HEK293T (cell line): ENCODE measurements at regions of chr16 and their contacts with region 1.

Region 1: DNA sequence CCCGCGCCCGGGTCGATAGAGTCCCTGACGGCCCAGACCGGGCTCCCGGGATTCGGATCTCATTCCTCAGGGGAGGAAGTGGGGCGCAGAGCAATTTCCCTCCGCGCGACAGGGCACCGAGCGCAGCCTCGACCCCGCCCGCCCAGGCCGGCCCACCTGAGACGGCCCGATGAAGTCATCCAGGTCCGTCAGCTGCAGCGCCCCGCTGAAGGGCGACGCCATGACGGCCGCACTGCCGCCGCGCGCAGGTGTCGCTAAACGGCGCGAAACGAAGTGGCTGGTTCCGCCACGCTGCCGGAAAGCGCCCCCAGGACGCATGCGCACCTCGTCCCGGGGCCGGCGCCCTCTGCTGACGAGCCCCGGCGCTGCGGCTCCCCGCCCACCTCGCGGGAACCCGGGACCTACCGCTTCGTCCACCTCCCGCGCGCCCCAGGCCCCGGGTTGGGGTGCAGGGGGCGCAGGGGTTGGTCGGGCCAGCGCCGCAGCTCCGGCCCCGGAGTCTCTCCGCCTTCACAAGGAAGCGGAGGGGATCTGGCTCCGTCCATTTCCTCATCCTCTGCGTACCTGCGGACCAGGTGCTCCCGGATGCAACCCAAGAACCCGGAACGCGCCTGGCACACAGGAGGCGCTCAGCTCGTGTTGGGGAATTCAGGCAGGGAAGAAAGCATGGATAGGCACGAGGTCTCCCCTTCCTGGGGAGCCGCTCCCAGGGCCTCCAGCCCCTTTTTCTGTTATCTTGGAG is at the start of gene CIAO3:
- DNase-seq: peak; percentile 94

Region 2: GRCh38 chr16:720990-721764 is 19.8 kb before region 1 on chr16 and contains the start of gene ANTKMT:
- CTCF ChIA-PET with region 1: interaction called, 4 read pairs
- POLR2A ChIA-PET with region 1: interaction called, 16 read pairs
- DNase-seq: peak; percentile 89

Region 3: DNA sequence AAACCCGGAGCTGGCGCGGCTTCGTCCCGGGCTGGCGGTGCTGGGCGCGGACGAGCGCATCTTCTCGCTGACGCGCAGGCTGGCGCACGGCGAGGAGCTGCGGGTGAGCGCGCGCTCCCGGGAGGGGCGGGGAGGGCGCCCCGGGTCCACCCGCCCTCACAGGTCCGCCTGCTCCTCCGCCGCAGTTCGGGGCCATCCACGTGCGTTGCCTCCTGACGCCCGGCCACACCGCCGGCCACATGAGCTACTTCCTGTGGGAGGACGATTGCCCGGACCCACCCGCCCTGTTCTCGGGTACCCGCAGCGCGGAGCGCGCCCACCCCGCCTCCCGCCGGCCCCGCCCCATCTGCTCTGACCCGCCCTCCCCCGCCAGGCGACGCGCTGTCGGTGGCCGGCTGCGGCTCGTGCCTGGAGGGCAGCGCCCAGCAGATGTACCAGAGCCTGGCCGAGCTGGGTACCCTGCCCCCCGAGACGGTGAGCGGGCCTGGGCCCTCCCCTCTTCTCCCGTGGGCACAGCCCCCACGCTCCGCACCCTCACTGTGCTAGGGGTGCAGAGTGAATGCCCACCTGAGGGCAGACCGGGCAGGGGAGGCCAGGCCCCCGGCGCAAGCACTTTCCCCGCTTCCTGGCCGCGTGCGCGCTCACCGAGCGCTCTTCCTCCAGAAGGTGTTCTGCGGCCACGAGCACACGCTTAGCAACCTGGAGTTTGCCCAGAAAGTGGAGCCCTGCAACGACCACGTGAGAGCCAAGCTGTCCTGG is 12.6 kb before region 1 on chr16:
- CTCF ChIA-PET with region 1: interaction called, 4 read pairs
- POLR2A ChIA-PET with region 1: interaction called, 13 read pairs
- DNase-seq: peak; percentile 69